ENCODE measurements at regions of chr10 and their contacts with region 1.

Region 1: GRCh38 chr10:6473901-6474370 is 106.1 kb downstream of the PRKCQ start:
- DNase-seq: peak; percentile 59
- ATAC-seq: peak; percentile 86
- H3K4me3 Mint-ChIP-seq: peak overlapping the region; percentile 90
- H3K27ac Mint-ChIP-seq: peak overlapping the region; percentile 99
- H3K4me1 Mint-ChIP-seq: peaks cover 64% of the 10 kb centered on the region
- H3K27me3 Mint-ChIP-seq: no peaks in the 10 kb centered on the region

Region 2: DNA sequence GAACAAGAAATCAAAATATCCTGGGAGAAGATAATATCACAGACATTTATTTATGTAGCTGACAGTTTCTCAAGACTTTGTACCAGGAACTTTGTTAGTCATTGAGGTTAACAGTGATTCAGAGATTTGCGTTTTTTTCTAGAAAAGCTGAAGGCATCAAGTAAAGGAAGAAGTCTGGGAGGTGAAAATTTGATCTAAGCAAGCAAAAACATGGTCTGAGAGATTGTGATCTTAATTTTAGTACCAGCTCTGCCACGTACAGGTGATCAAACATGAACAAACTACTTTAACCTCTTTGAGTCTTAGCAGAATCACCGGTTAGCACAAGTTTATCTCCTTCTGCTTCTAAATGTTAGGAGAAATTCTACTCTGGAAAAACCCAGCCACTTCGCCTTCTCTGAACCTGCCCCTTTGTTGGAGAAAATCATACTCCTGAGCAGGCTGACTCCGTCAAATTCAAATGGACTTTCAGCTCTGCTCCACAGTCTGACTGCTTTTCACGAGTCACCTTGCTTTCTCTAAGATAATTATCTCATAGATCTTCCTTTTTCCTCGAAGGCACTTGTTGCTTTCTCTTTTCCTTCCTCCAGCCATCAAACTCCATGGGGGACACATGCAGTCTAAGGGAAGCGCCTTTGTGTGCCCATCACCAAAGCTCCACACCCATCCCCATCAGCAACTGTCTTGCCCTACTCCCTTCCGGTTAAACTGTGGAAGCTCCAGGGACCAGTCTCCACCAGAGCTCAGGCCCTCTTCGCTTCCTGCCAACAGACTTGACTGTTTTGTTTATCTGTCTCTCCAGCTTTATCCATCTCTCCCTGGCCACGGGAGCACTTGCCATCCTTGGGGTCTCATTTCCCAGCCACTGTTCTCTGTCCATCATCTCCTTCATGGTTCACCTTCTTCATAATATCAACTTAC is 19.8 kb after region 1 on chr10:
- CTCF ChIA-PET with region 1: interaction called, 15 read pairs
- POLR2A ChIA-PET with region 1: interaction called, 7 read pairs
- DNase-seq: peak; percentile 24
- ATAC-seq: peak; percentile 16
- H3K4me3 Mint-ChIP-seq: no peak overlapping the region
- H3K27ac Mint-ChIP-seq: no peak overlapping the region
- H3K4me1 Mint-ChIP-seq: peaks cover 30% of the 10 kb centered on the region
- H3K27me3 Mint-ChIP-seq: no peaks in the 10 kb centered on the region